ENCODE measurements at regions of chr22 and their contacts with region 1.

Region 1: GRCh38 chr22:40636380-40637182 is at the start of gene MRTFA:
- DNase-seq: peak; percentile 100
- total RNA-seq, gene MRTFA: 72.8 to 76.5 TPM

Region 2: GRCh38 chr22:40436505-40437451 is 199.8 kb before region 1 on chr22:
- intact Hi-C with region 1: loop called (anchors 2 to 5 kb)
- DNase-seq: no peak

Region 3: DNA sequence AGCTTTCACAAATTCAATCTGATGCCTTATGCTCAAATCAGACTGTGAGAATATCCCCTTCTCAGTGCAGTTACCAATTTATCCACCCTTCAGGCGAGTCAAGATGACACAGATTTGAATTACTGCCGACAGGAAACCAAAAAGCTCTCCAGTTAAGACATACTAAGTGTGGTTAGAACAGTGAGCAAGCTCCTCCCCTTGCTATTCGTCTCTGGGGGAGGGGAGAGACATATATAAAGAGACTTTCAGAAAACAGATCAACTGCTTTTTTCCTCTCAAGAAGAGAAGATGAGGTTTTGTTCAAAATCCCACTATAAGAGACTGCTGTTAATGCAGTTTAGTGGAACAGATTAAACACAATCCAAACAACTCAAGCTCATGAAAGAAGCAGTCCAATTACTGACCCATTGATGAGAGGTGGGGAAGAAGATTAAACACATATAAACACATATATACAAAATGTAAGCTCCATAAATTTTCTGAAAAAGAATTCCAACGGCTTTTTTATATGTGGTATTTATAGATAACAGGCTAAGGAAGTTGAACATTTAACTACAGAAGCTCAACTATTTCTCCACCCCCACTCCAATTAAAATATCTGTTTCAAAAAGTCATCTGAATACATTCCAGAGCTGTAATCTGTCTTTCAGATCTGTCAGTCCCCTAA is 102.7 kb before region 1 on chr22:
- intact Hi-C with region 1: loop called in 1 of 2 experiments (anchors 5 kb)
- DNase-seq: no peak